Astrocyte of the cerebellum (primary cell): ENCODE measurements at regions of chr4 and their contacts with region 1.

Region 1: DNA sequence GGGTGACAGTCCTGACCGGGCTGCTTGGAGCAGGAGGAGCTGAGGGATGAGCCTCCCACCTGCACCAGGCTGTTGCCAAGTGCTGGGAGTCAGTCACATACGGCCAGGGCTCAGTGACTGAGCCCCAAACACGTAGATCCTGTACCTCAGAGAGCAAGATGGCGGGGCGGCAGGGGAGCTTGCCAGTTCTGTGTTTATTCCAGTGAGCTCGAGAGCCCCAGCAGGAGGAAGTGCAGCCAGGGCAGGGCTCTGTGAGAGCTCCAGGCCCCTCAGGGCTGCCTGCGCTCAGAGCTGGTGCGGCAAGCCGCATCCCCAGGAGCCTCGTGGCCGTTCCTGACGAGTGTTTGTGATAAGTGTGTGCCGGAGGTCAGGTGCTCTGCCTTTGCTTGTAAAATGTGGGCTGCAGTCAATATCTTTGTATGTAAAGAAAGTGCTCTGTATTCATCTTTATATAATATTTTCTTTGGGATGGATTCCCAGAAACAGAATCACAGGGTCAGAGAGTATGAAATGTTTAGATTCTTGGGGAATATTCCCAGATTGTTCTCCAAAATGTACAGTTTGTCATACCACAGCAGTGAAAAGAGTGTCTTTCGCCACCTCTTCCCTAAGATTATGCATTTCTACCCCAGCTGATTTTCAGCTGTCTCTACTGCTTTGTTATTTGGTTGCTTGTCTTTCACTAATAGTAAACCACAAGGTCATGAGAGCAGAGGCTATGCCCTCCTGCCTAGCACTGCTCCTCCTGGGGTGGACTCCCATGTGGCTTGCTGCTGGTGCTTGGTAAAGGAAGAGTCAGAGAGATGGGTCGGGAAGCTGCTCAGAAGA is 50.3 kb downstream of the NELFA start:
- DNase-seq: no peak
- H3K4me3 ChIP-seq: no peak overlapping the region
- CTCF ChIP-seq: no peak

Region 2: GRCh38 chr4:2008875-2009703 is 50.6 kb after region 1 on chr4 and contains the start of gene NELFA:
- in situ Hi-C with region 1: loop called (anchors 10 kb)
- DNase-seq: peak; percentile 80
- H3K4me3 ChIP-seq: peak within 1 kb of the TSS; percentile 86
- CTCF ChIP-seq: peak; percentile 8